Heart right ventricle (tissue), 16 donors: ENCODE measurements at regions of chr7 and their contacts with region 1.

Region 1: DNA sequence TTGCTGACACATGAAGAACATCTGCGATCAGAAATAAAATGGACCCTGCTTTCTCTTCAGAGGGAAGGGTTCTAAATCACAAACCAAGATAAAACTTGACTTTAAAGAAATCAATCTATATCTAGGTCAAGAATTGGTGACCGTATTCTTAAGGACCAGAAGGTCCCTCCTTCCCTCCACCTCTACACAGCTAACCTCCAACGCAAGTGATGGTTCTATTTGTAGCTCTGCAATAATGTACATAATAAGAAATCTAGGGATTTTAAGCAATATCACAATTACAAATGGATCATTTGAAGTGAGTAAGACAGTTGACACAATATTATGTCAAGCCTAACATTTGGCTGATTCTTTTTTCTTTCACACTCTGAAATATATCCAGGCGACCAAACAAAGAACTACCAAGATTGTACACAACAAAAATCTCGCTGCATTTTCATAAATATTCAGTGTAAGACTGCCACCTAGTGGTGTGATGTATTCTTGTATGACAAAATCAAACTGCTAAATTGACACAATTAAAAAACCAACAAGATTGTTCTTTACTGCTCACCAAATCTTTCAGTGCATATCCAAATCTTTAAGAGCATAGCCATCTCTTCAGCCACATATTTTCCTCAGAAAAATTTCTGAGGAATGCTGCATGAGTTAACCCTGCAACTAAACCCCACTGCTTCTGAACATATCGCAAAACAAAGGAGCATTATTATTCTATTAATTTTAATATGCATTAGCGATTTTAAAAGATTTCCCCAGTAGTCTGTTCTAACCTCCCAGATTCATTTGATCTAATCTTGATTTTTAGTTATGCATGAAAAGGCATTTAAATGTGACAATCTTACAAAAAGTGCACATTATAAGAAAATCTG is 44.5 kb downstream of the ICA1 start:
- DNase-seq: peak in 1 of 2 donors; percentile 51
- ATAC-seq: peak in 5 of 8 donors; percentile 19 to 50 (median 32)
- H3K4me3 ChIP-seq: no peak overlapping the region
- H3K27ac ChIP-seq: no peak overlapping the region
- H3K4me1 ChIP-seq: peaks cover 0 to 18% (median 8%) of the 10 kb centered on the region in 9 donors
- H3K27me3 ChIP-seq: no peaks in the 10 kb centered on the region
- CTCF ChIP-seq: peak; percentile 55 to 84 (median 74)

Region 2: DNA sequence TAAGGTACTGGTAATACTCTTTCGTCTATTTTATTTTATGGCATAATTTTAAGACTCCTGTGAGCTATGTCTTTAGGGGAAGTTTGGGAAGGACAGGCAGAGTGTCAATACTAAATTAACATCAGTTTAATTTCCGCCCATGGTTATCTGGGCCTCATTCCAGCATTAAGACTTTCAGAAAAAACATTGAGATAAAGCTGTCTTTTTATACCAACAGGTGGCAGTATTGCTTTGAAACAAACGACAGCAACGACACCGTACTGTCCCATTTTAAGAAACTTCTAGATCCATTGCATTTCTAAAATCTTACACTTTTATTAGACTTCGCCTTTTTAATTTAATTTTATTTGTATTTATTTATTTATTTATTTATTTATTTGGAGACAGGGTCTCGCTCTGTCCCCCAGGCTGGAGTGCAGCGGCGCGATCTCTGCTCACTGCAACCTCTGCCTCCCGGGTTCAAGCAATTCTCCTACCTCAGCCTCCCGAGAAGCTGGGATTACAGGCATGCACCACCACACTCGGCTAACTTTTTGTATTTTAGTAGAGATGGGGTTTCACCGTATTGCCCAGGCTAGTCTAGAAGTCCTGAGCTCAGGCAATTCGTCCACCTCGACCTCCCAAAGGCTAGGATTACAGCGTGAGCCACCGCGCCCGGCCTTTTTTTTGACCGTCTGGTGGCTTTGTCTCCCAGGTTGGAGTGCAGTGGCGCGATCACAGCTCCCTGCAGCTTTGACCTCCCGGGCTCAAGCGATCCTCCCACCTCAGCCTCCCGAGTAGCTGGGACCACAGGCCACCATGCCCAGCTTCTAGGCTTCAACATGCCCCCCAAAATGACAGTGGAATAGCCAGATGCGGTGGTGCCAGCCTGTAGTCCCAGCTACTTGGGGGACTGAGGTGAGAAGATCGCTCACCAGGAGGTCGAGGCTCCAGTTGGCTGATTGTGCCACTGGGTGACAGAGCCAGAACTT is 1113.8 kb before region 1 on chr7:
- intact Hi-C with region 1: loop called in 2 of 10 experiments (anchors 5 to 10 kb)
- DNase-seq: peak in 1 of 2 donors; percentile 6
- ATAC-seq: peak in 6 of 8 donors; percentile 43 to 79 (median 63)
- H3K4me3 ChIP-seq: peak overlapping the region in 3 of 10 donors; percentile 12 to 30 (median 18)
- H3K27ac ChIP-seq: no peak overlapping the region
- H3K4me1 ChIP-seq: peaks cover 0 to 29% (median 15%) of the 10 kb centered on the region in 9 donors
- H3K27me3 ChIP-seq: no peaks in the 10 kb centered on the region
- CTCF ChIP-seq: peak; percentile 54 to 80 (median 72)

Region 3: GRCh38 chr7:7595451-7595850 is 622.0 kb before region 1 on chr7:
- intact Hi-C with region 1: loop called in 7 of 10 experiments (anchors 2 to 10 kb)
- DNase-seq: no peak
- ATAC-seq: peak in 1 of 8 donors; percentile 41
- H3K4me3 ChIP-seq: no peak overlapping the region
- H3K27ac ChIP-seq: no peak overlapping the region
- H3K4me1 ChIP-seq: no peaks in the 10 kb centered on the region
- H3K27me3 ChIP-seq: no peaks in the 10 kb centered on the region
- CTCF ChIP-seq: peak in 7 of 9 donors; percentile 38 to 60 (median 48)

Region 4: GRCh38 chr7:7672545-7673239 is 544.7 kb before region 1 on chr7:
- intact Hi-C with region 1: loop called in 2 of 10 experiments (anchors 10 kb)
- DNase-seq: no peak
- ATAC-seq: no peak
- H3K4me3 ChIP-seq: no peak overlapping the region
- H3K27ac ChIP-seq: no peak overlapping the region
- H3K4me1 ChIP-seq: peaks cover 0 to 28% (median 6%) of the 10 kb centered on the region in 9 donors
- H3K27me3 ChIP-seq: no peaks in the 10 kb centered on the region
- CTCF ChIP-seq: no peak

Region 5: GRCh38 chr7:7761340-7761980 is 456.0 kb before region 1 on chr7:
- intact Hi-C with region 1: loop called in 5 of 10 experiments (anchors 10 kb)
- DNase-seq: no peak
- ATAC-seq: peak in 7 of 8 donors; percentile 37 to 74 (median 68)
- H3K4me3 ChIP-seq: peak overlapping the region in 9 of 10 donors; percentile 23 to 61 (median 51)
- H3K27ac ChIP-seq: peak overlapping the region; percentile 21 to 86 (median 72)
- H3K4me1 ChIP-seq: peaks cover 0 to 28% (median 11%) of the 10 kb centered on the region in 9 donors
- H3K27me3 ChIP-seq: no peaks in the 10 kb centered on the region
- CTCF ChIP-seq: peak; percentile 21 to 74 (median 57)

Region 6: GRCh38 chr7:8295638-8296361 is 78.4 kb after region 1 on chr7:
- intact Hi-C with region 1: loop called in 1 of 10 experiments (anchors 10 kb)
- DNase-seq: peak in 1 of 2 donors; percentile 53
- ATAC-seq: peak; percentile 86 to 96 (median 89)
- H3K4me3 ChIP-seq: no peak overlapping the region
- H3K27ac ChIP-seq: no peak overlapping the region
- H3K4me1 ChIP-seq: peaks cover 0 to 2% (median 0%) of the 10 kb centered on the region in 9 donors
- H3K27me3 ChIP-seq: no peaks in the 10 kb centered on the region
- CTCF ChIP-seq: peak; percentile 55 to 88 (median 79)